ENCODE measurements at regions of chr6 and their contacts with region 1.

Region 1: DNA sequence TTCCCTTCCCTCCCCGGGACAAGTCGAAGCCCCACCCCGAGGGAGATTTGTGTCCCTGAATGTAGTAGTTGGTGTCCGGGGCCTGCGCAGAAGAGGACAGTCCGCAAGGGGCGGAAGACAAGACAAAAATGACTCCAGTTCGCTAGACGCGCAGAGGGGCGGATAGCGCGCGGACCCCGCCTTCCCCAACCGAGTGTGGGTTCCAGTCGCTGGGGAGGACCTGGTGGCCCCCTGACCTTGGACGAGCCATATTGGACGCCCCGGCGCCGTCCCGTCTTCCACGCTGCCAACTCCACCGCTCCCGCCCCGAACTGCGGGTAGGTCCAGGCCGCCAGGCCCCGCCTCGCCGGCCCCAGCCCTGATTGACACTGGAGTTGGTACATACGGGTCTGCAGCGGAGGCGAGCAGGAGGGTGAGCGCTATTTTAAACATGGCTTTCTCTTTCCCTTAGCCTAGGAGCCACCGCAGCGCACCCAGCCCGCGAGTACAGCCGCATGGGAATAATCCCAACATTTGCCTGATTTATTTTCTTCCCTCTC is 802 bp downstream of the HMGN3 start:
- DNase-seq: peak; percentile 63
- ATAC-seq: peak; percentile 57
- H3K4me3 Mint-ChIP-seq: peak overlapping the region; percentile 96
- H3K27ac Mint-ChIP-seq: peak overlapping the region; percentile 89
- H3K4me1 Mint-ChIP-seq: peaks cover 14% of the 10 kb centered on the region
- H3K27me3 Mint-ChIP-seq: no peaks in the 10 kb centered on the region
- CTCF ChIP-seq: no peak

Region 2: GRCh38 chr6:78867370-78868040 is 366.2 kb before region 1 on chr6 and contains the start of gene IRAK1BP1:
- CTCF ChIA-PET with region 1: no interaction called
- POLR2A ChIA-PET with region 1: interaction called, 3 read pairs
- intact Hi-C with region 1: loop called (anchors 1 kb)
- DNase-seq: peak; percentile 75
- ATAC-seq: peak; percentile 96
- H3K4me3 Mint-ChIP-seq: peak within 1 kb of the TSS; percentile 99
- H3K27ac Mint-ChIP-seq: peak within 1 kb of the TSS; percentile 98
- H3K4me1 Mint-ChIP-seq: peaks cover 20% of the 10 kb centered on the region
- H3K27me3 Mint-ChIP-seq: no peaks in the 10 kb centered on the region
- CTCF ChIP-seq: no peak
- total RNA-seq, gene IRAK1BP1: 2.4 and 3.0 TPM in 2 replicates

Region 3: DNA sequence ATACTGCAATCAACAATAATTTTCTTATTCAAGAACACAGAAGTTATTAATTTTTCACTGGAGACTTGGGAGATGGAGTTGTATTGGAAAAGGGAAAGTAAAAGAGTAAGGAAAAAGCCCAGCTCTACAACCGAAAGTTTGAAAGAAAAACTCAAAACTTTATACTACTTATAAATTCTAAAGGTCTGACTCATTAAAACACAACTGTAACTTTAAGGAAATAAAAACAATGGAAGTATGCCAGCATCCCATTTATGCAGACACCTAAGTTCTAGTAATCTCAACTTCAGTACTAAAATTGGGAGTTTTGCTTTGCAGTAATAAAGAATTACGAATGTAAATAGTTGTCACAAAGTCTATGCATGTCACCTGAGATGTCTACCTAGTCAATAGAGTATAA is 285.7 kb before region 1 on chr6:
- CTCF ChIA-PET with region 1: no interaction called
- POLR2A ChIA-PET with region 1: no interaction called
- intact Hi-C with region 1: no loop called
- DNase-seq: no peak
- ATAC-seq: no peak
- H3K4me3 Mint-ChIP-seq: no peak overlapping the region
- H3K27ac Mint-ChIP-seq: no peak overlapping the region
- H3K4me1 Mint-ChIP-seq: no peaks in the 10 kb centered on the region
- H3K27me3 Mint-ChIP-seq: no peaks in the 10 kb centered on the region
- CTCF ChIP-seq: no peak

Region 4: GRCh38 chr6:79078075-79079025 is 155.3 kb before region 1 on chr6 and contains the start of gene PHIP:
- CTCF ChIA-PET with region 1: no interaction called
- POLR2A ChIA-PET with region 1: interaction called, 8 read pairs
- intact Hi-C with region 1: loop called (anchors 1 kb)
- DNase-seq: peak; percentile 93
- ATAC-seq: peak; percentile 73
- H3K4me3 Mint-ChIP-seq: peak within 1 kb of the TSS; percentile 87
- H3K27ac Mint-ChIP-seq: peak within 1 kb of the TSS; percentile 96
- H3K4me1 Mint-ChIP-seq: peaks cover 43% of the 10 kb centered on the region
- H3K27me3 Mint-ChIP-seq: peaks cover 3% of the 10 kb centered on the region
- CTCF ChIP-seq: no peak
- total RNA-seq, gene PHIP: 27.7 and 32.3 TPM in 2 replicates

Region 5: DNA sequence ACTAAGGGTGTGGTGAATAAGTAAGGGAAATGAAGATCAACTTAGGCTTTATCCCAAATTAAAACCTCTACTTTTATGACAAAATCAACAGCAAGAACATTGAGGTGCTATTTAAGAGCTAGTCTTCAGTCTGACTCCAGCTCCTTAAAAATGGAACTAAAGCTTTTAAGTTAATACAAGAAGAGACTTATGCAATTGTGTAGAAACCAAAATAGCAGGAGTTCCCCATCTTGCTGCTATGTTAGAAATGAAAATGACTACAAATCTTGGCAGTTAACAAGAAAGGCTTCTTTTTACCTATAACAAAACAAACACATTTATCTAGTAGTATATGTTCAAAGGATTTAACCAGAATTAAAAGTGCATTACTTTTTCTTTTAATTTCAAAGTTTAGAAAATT is 24.9 kb before region 1 on chr6:
- CTCF ChIA-PET with region 1: no interaction called
- POLR2A ChIA-PET with region 1: no interaction called
- intact Hi-C with region 1: no loop called
- DNase-seq: no peak
- ATAC-seq: no peak
- H3K4me3 Mint-ChIP-seq: no peak overlapping the region
- H3K27ac Mint-ChIP-seq: no peak overlapping the region
- H3K4me1 Mint-ChIP-seq: no peaks in the 10 kb centered on the region
- H3K27me3 Mint-ChIP-seq: no peaks in the 10 kb centered on the region
- CTCF ChIP-seq: no peak

Region 6: GRCh38 chr6:79250107-79250514 is 16.4 kb after region 1 on chr6:
- CTCF ChIA-PET with region 1: no interaction called
- POLR2A ChIA-PET with region 1: no interaction called
- intact Hi-C with region 1: no loop called
- DNase-seq: no peak
- ATAC-seq: no peak
- H3K4me3 Mint-ChIP-seq: no peak overlapping the region
- H3K27ac Mint-ChIP-seq: no peak overlapping the region
- H3K4me1 Mint-ChIP-seq: peaks cover 15% of the 10 kb centered on the region
- H3K27me3 Mint-ChIP-seq: no peaks in the 10 kb centered on the region
- CTCF ChIP-seq: no peak

Region 7: DNA sequence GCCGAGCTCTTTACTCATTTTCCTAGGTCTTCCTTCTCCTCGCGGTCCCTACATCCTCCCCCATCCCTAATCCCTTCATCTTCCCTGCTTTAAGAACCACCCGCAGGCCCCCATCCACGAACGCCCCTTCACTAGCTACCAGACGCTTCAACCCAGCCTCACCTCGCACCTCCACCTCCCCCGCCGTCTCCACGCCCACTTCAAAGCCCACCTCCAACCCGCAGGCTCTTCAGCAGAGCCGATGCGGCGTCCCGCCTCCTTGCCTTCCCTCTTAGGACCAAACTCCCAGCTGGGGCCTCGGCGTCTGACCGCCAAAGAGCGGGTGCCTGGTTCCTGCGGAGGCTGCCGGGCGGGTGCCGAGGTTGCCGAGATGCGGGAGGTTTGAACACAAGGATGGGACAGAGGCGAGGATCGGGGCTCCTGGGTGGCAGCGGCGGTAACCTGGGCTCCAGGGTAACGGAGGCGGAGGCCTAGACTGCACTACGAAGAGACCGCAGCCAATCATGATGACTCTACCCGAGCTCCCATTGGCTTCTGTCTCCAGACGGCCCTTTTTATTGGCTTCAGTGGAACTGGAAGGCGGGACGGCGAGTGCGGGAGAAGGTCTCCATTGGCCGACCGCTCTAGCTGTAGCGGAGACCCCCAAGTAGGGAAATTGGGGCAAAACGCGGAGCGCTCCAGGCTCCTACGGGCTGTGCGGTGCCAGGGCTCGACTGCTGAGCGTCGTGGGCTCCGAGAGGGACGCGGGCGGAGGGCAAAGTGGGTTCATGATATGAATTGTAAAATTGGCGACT is 303.5 kb after region 1 on chr6 and contains the start of gene LCA5:
- CTCF ChIA-PET with region 1: no interaction called
- POLR2A ChIA-PET with region 1: no interaction called
- intact Hi-C with region 1: loop called (anchors 1 kb)
- DNase-seq: peak; percentile 73
- ATAC-seq: peak; percentile 98
- H3K4me3 Mint-ChIP-seq: no peak within 1 kb of the TSS
- H3K27ac Mint-ChIP-seq: no peak within 1 kb of the TSS
- H3K4me1 Mint-ChIP-seq: no peaks in the 10 kb centered on the region
- H3K27me3 Mint-ChIP-seq: no peaks in the 10 kb centered on the region
- CTCF ChIP-seq: no peak
- total RNA-seq, gene LCA5: 0.17 and 0.18 TPM in 2 replicates

Region 8: GRCh38 chr6:79869600-79870084 is 636.0 kb after region 1 on chr6:
- CTCF ChIA-PET with region 1: no interaction called
- POLR2A ChIA-PET with region 1: no interaction called
- intact Hi-C with region 1: loop called (anchors 10 kb)
- DNase-seq: peak; percentile 65
- ATAC-seq: peak; percentile 100
- H3K4me3 Mint-ChIP-seq: peak overlapping the region; percentile 65
- H3K27ac Mint-ChIP-seq: no peak overlapping the region
- H3K4me1 Mint-ChIP-seq: peaks cover 10% of the 10 kb centered on the region
- H3K27me3 Mint-ChIP-seq: peaks cover 4% of the 10 kb centered on the region
- CTCF ChIP-seq: peak; percentile 71